ENCODE measurements at regions of chr14 and their contacts with region 1.

Region 1: DNA sequence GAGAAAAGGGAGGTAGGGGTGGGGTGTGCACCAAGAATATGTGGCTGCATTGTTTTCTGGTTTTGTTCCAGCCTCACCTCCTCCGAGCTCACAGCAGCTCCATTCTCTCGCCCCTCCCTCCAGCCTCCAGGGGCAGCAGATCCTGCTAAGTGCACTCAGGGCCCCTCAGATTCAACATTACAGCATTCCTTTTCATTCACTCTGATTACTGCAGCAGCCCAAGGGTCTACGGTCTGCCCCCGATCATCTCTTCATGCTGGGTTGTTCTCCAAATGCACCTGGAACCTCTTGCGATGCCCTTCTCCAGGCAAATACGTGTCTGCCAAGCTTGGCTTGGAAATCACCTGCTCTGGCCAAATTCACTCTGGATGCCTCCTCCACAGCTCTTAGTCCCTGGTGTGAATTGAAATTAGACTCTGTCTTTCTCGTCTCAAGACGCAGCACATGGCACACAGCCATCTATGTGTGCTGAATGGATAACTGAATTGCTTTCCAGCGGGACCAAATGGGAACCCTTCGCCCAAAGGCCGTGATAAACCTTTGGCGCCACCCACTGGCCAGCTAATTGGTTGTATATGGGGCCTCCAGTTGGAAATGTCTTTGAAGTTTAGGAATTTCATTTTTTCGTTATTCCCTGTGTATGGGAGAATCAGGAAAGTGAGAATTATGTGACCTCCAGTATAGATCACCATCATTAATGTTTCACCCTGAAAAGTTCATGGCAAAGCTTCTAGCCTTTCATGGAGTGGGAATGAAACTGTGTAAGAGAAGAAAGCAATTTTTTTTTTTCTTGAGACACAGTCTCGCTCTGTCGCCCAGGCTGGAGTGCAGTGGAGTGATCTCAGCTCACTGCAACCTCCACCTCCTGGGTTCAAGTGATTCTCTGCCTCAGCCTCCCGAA is 9.6 kb upstream of the HSP90AA1 start:
- DNase-seq: peak; percentile 81 to 94 (median 90)
- H3K4me3 ChIP-seq: peak overlapping the region in 25 of 59 donors; percentile 5 to 50 (median 29)
- H3K27ac ChIP-seq: peak overlapping the region in 54 of 59 donors; percentile 2 to 87 (median 69)
- H3K27me3 ChIP-seq: no peaks in the 10 kb centered on the region
- CTCF ChIP-seq: peak; percentile 71 to 93 (median 84)

Region 2: DNA sequence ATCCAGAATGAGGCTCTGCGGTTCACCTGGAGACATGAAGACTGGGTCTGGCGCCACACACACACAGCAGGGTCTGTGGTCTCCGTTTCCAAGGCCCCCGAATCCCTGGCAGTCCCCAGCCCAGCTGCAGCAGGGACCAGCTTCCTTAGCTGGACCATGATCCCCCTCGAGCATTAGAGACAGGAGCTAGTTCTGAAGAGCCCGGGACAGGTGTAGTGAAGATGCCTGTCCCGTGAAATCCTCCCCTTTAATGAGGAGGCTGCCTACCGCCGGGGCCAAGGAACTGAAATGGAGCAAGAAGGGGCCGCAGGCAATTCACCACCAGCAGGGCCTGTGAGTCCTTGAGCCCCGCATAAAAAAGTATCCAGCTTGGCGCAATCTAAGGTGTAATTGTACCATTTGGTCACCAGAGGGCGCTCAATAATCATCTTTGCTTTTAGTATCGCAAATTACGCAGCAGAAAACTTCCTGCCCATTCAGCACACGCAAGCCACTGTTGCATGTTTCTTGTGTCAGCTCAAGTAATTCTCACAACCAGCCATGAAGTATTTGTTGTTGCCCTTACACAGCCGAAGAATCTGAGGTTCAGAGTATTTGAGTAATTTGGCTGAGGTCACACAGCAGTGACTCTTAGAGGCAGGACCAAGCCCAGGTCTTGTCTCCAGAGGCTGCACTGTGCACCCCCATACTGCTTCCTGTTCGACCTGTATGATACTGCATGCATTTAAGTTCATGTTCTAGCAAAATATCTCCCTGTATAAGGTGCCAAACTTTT is 389.2 kb before region 1 on chr14:
- intact Hi-C with region 1: loop called in 1 of 2 experiments (anchors 5 kb)
- DNase-seq: peak in 3 of 10 donors; percentile 27 to 61 (median 52)
- H3K4me3 ChIP-seq: peak overlapping the region in 16 of 59 donors; percentile 6 to 38 (median 22)
- H3K27ac ChIP-seq: peak overlapping the region in 11 of 59 donors; percentile 10 to 72 (median 45)
- H3K27me3 ChIP-seq: peaks cover 0 to 26% (median 7%) of the 10 kb centered on the region in 45 donors
- CTCF ChIP-seq: peak; percentile 71 to 98 (median 91)

Region 3: GRCh38 chr14:102215071-102215470 is 118.6 kb after region 1 on chr14:
- intact Hi-C with region 1: loop called (anchors 5 kb)
- DNase-seq: peak in 9 of 10 donors; percentile 35 to 84 (median 69)
- H3K4me3 ChIP-seq: peak overlapping the region in 25 of 59 donors; percentile 1 to 44 (median 23)
- H3K27ac ChIP-seq: peak overlapping the region; percentile 41 to 100 (median 81)
- H3K27me3 ChIP-seq: no peaks in the 10 kb centered on the region
- CTCF ChIP-seq: peak in 9 of 56 donors; percentile 4 to 31 (median 16)

Measured in dorsolateral prefrontal cortex (tissue), 120 donors.